Head of caudate nucleus (tissue), 42 donors: ENCODE measurements at regions of chr3 and their contacts with region 1.

Region 1: DNA sequence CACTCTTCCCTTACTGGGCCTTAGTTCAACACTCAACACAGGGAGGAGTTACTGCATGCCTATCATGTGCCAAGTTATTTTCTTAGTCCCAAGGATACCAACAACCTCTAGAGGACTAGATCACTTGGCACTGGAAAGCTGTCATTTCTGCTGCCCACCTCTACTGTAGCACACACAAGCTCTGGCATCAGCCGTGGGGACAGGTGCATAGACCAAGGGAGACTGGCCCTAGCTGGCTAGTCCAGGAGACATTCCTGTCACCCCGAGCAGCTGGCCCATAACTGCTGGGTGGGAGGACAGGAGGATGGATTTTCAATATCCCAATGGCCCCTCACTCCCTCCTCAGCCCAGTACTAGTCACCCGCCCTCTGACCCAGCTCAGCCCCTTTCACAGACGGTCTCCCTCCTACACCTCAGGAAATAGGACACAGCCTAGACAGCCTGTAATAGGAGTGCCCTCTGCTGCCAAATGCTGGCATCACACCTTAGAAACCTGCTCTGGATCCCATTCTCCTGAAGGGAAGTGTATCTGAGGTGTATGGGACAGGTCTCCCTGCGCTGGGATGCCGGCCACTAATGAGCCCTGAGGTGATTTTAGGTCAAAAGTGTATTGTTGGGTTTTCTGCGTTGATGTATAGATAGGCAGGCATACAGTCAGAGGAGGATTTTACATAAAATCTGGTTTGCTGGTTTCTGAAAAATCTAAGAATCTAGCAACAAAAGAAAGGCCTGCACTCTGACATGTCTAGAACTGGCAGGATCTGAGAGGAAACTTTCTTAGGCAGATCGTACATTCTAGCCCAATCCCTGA is 3.4 kb upstream of the DZIP1L start:
- DNase-seq: peak; percentile 30 to 90 (median 77)

Region 2: GRCh38 chr3:137906985-137907640 is 211.7 kb before region 1 on chr3:
- intact Hi-C with region 1: no loop called
- DNase-seq: no peak

Region 3: GRCh38 chr3:138068579-138069174 is 50.1 kb before region 1 on chr3:
- intact Hi-C with region 1: loop called (anchors 5 kb)
- DNase-seq: peak; percentile 49 to 90 (median 78)

Region 4: DNA sequence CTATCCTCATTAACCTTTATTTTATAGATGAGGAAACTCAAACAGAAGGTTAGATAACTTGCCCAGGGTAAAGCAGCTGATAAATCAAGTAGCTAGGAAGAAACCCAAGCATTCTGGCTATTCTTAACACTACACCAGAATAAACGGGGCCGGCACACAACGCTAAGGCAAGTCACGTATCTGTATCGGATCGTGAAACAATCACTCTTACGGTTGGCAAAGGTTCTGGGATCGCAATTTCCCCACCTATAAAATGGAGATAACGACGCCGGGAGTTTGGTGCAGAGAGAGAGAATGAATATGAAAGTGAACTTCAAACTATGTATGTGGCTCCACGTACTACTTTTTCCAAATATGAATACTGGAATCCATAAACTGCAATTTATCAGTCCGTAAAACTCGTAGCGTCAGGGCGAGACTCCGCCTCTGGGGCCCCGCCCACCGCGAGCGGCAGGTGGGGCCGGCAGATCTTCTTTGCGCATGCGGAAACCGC is 68.0 kb after region 1 on chr3:
- intact Hi-C with region 1: no loop called
- DNase-seq: peak; percentile 80 to 96 (median 92)

Region 5: GRCh38 chr3:138493804-138494606 is 375.2 kb after region 1 on chr3:
- intact Hi-C with region 1: no loop called
- DNase-seq: no peak